Activated CD4-positive, alpha-beta memory T cell treated with anti-CD3 and anti-CD28 coated beads for 36 hours (primary cell): ENCODE measurements at regions of chr6 and their contacts with region 1.

Region 1: GRCh38 chr6:13767121-13767808 is 47.1 kb downstream of the MCUR1 start:
- DNase-seq: peak; percentile 46
- H3K4me3 Mint-ChIP-seq: peak overlapping the region; percentile 52
- H3K27ac Mint-ChIP-seq: no peak overlapping the region
- H3K4me1 Mint-ChIP-seq: peaks cover 31% of the 10 kb centered on the region
- H3K27me3 Mint-ChIP-seq: no peaks in the 10 kb centered on the region

Region 2: GRCh38 chr6:13614926-13615798 is 152.1 kb before region 1 on chr6 and contains the start of gene NOL7:
- CTCF ChIA-PET with region 1: interaction called, 7 read pairs
- POLR2A ChIA-PET with region 1: interaction called, 10 read pairs
- intact Hi-C with region 1: loop called (anchors 5 kb)
- DNase-seq: peak; percentile 99
- H3K4me3 Mint-ChIP-seq: peak within 1 kb of the TSS; percentile 87
- H3K27ac Mint-ChIP-seq: peak within 1 kb of the TSS; percentile 92
- H3K4me1 Mint-ChIP-seq: peaks cover 44% of the 10 kb centered on the region
- H3K27me3 Mint-ChIP-seq: no peaks in the 10 kb centered on the region
- total RNA-seq, gene NOL7: 88.0 to 94.9 TPM

Region 3: GRCh38 chr6:13725570-13725969 is 41.7 kb before region 1 on chr6:
- CTCF ChIA-PET with region 1: no interaction called
- POLR2A ChIA-PET with region 1: no interaction called
- intact Hi-C with region 1: loop called (anchors 2 kb)
- DNase-seq: peak; percentile 58
- H3K4me3 Mint-ChIP-seq: peak overlapping the region; percentile 13
- H3K27ac Mint-ChIP-seq: peak overlapping the region; percentile 38
- H3K4me1 Mint-ChIP-seq: peaks cover 32% of the 10 kb centered on the region
- H3K27me3 Mint-ChIP-seq: no peaks in the 10 kb centered on the region

Region 4: GRCh38 chr6:13742961-13743735 is 24.1 kb before region 1 on chr6:
- CTCF ChIA-PET with region 1: no interaction called
- POLR2A ChIA-PET with region 1: interaction called, 6 read pairs
- intact Hi-C with region 1: loop called (anchors 1 kb)
- DNase-seq: no peak
- H3K4me3 Mint-ChIP-seq: peak overlapping the region; percentile 53
- H3K27ac Mint-ChIP-seq: no peak overlapping the region
- H3K4me1 Mint-ChIP-seq: peaks cover 14% of the 10 kb centered on the region
- H3K27me3 Mint-ChIP-seq: no peaks in the 10 kb centered on the region

Region 5: DNA sequence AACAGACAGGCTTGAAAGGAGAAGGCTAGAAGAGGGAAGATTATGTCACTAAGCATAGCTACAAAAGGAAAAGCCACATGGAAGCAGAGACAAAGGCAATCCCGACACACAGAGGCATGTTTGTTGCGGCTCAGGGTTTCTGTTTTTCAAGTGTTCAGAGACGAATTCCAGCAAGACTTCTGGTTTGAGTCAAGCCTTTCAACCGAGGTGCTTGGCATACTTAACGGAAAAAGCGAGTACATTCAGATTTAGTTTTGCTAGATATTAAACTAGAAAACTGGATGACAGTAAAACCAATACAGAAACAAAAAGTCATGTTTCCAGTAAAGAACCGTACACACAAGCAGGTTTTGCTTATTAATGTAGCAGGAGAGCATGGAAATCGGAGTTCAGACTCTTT is 19.9 kb after region 1 on chr6:
- CTCF ChIA-PET with region 1: interaction called, 3 read pairs
- POLR2A ChIA-PET with region 1: interaction called, 8 read pairs
- intact Hi-C with region 1: loop called (anchors 1 kb)
- DNase-seq: peak; percentile 63
- H3K4me3 Mint-ChIP-seq: no peak overlapping the region
- H3K27ac Mint-ChIP-seq: peak overlapping the region; percentile 68
- H3K4me1 Mint-ChIP-seq: peaks cover 34% of the 10 kb centered on the region
- H3K27me3 Mint-ChIP-seq: no peaks in the 10 kb centered on the region